Psoas muscle (tissue), 8 donors: ENCODE measurements at regions of chr9 and their contacts with region 1.

Region 1: GRCh38 chr9:79610791-79611614 is 39.2 kb downstream of the TLE4 start:
- DNase-seq: no peak
- ATAC-seq: peak; percentile 73 to 92 (median 88)
- H3K4me3 ChIP-seq: no peak overlapping the region
- H3K27ac ChIP-seq: peak overlapping the region; percentile 63
- H3K4me1 ChIP-seq: peaks cover 70% of the 10 kb centered on the region
- H3K27me3 ChIP-seq: no peaks in the 10 kb centered on the region
- CTCF ChIP-seq: no peak

Region 2: GRCh38 chr9:79577969-79578723 is 32.9 kb before region 1 on chr9:
- intact Hi-C with region 1: loop called in 1 of 2 experiments (anchors 5 kb)
- DNase-seq: no peak
- ATAC-seq: no peak
- H3K4me3 ChIP-seq: peak overlapping the region; percentile 43
- H3K27ac ChIP-seq: peak overlapping the region; percentile 13
- H3K4me1 ChIP-seq: peaks cover 87% of the 10 kb centered on the region
- H3K27me3 ChIP-seq: no peaks in the 10 kb centered on the region
- CTCF ChIP-seq: no peak

Region 3: DNA sequence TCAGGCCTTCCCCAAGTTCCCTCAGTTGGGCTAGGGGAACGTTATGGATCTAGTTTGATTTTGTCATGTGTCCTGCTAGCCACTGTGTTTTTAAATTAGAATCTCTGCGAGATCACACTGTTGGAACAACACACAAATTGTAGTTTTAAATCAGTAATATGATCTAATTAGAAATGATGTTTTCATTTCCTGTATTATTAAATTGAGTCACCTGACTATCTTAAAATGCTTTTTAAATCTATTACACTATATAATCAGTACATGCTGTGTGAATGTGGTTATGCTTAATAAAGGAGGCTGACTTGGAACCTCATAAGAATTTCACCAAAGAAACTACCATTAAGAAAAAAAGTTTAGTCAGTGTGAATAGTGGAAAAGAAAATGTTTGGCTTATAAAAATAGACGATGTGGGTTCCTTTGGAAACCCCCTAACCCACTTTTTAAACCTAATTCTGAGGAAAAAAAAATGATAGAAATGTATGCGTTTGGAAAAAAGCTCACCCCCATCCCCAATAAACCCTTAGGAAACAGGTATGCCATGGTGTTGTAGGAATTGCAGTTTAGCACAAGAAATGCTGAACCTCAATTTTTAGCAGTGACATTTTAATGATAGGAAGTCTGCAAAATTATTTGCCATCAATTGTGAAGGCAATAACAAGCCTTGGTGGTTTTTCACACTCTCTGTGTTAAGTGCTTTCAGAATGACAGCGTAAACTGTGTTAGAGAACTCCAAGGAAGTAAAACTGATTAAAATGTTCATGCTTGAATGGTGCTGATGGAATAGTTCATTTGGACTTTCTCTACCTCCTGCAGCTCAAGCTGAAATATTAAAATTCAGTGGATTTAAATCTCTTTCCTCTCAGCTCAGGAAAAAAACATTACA is 19.8 kb after region 1 on chr9:
- intact Hi-C with region 1: no loop called
- DNase-seq: no peak
- ATAC-seq: no peak
- H3K4me3 ChIP-seq: no peak overlapping the region
- H3K27ac ChIP-seq: no peak overlapping the region
- H3K4me1 ChIP-seq: no peaks in the 10 kb centered on the region
- H3K27me3 ChIP-seq: no peaks in the 10 kb centered on the region
- CTCF ChIP-seq: no peak

Region 4: GRCh38 chr9:79694676-79695400 is 83.8 kb after region 1 on chr9:
- intact Hi-C with region 1: loop called in 1 of 2 experiments (anchors 5 kb)
- DNase-seq: no peak
- ATAC-seq: no peak
- H3K4me3 ChIP-seq: no peak overlapping the region
- H3K27ac ChIP-seq: no peak overlapping the region
- H3K4me1 ChIP-seq: peaks cover 25% of the 10 kb centered on the region
- H3K27me3 ChIP-seq: no peaks in the 10 kb centered on the region
- CTCF ChIP-seq: no peak